GM12878 (cell line): ENCODE measurements at regions of chr17 and their contacts with region 1.

Region 1: GRCh38 chr17:59837308-59838051 is 55.3 kb downstream of the TUBD1 start:
- DNase-seq: peak; percentile 97
- ATAC-seq: peak; percentile 70
- H3K4me3 ChIP-seq: peak overlapping the region; percentile 91
- H3K27ac ChIP-seq: peak overlapping the region; percentile 97
- H3K4me1 ChIP-seq: peaks cover 35% of the 10 kb centered on the region
- H3K27me3 ChIP-seq: no peaks in the 10 kb centered on the region
- CTCF ChIP-seq: no peak
- EP300 ChIP-seq: peak in 1 of 2 experiments; percentile 70; a peak in 2 of 4 replicates
- POLR2A ChIP-seq: peak; percentile 94
- RAD21 ChIP-seq: no peak

Region 2: GRCh38 chr17:58337600-58338453 is 1499.7 kb before region 1 on chr17:
- CTCF ChIA-PET with region 1: no interaction called
- POLR2A ChIA-PET with region 1: no interaction called
- RAD21 ChIA-PET with region 1: no interaction called
- SMC1A ChIA-PET with region 1: no interaction called
- in situ Hi-C with region 1: loop called (anchors 10 kb)
- intact Hi-C with region 1: no loop called
- DNase-seq: peak; percentile 90
- ATAC-seq: peak; percentile 62
- H3K4me3 ChIP-seq: peak overlapping the region; percentile 83
- H3K27ac ChIP-seq: peak overlapping the region; percentile 100
- H3K4me1 ChIP-seq: peaks cover 59% of the 10 kb centered on the region
- H3K27me3 ChIP-seq: no peaks in the 10 kb centered on the region
- CTCF ChIP-seq: no peak
- EP300 ChIP-seq: peak; percentile 98
- POLR2A ChIP-seq: peak; percentile 82
- RAD21 ChIP-seq: peak; percentile 19; the same call in 1 of the 2 replicates